ENCODE measurements at regions of chr17 and their contacts with region 1.

Region 1: DNA sequence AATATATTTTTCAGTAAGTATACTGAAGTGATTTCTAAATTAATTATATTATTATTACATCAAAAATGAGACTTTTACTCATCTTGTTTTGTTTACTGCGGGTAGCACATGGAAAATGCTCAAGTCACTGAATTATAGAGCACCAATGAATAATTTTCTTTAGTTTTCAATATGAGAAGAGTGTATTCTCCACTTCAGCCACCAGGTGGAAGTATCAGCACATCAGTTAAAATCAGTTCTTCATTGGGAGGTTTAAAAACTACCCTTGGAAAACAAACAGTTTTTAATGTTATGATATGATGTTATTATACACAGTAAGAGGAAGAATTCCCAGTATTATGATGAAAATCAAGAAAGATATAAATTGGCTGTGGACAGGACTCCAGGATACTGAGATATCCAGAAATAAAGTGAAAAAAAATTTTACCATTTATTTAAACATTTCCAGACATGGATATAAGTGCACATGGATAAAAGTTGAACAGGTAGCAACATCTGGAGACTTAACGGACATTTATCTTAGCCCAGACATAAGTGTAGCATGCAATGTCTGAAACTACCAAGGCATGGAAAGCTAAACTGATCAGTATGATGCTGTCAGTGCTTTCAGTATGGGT is 467.3 kb downstream of the KCNJ2 start:
- ATAC-seq: peak in 1 of 8 experiments; percentile 38
- H3K4me3 ChIP-seq: no peak overlapping the region
- H3K27ac ChIP-seq: no peak overlapping the region
- H3K4me1 ChIP-seq: peaks cover 0 to 3% of the 10 kb centered on the region in 2 donors

Region 2: DNA sequence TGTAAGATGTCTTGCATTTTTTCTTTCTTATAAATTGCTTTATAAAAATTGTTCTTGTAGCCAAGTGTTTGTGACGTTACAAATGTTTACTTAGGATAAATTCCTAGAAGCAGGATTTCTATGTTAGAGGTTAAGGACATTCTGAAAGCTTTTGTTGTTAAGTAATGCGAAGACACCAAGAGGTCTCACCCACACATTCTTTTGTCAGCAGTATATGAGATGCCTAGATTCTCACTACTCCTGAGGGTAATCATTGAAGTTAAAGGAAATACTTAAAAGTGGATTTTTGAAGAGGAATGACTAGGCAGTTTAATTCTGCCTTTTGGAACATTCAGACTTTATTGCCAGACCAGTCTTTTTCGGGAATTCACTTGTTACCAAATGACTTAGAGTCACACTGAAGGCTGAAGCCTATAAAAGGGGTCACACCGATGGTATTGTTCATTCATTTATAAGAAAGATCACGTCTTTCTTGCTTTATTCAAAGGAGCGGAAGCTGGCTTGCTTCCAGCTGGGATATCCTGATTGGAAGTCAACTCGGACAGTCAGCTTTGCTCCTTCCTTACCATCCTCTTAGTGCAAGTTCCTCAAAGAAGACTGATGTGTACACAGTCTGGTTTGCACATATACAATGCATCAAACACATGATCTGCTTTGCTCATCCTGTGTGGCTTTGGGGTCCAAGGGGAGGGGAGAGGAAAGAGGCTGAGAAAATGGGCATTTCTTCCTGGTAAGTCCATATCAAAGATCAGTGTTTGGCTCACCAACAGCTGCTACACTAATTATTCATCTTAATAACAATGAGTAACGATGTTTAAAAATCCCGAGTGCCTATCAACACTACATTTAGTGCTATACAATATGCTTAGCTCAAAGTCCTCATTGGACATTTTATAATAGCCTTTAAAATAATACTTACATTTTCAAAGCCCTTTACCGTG is 1062.1 kb before region 1 on chr17:
- in situ Hi-C with region 1: loop called in 2 of 9 experiments (anchors 25 kb)
- ATAC-seq: peak in 2 of 8 experiments; percentile 30 to 43
- H3K4me3 ChIP-seq: no peak overlapping the region
- H3K27ac ChIP-seq: no peak overlapping the region
- H3K4me1 ChIP-seq: peaks cover 0 to 6% of the 10 kb centered on the region in 2 donors

Region 3: DNA sequence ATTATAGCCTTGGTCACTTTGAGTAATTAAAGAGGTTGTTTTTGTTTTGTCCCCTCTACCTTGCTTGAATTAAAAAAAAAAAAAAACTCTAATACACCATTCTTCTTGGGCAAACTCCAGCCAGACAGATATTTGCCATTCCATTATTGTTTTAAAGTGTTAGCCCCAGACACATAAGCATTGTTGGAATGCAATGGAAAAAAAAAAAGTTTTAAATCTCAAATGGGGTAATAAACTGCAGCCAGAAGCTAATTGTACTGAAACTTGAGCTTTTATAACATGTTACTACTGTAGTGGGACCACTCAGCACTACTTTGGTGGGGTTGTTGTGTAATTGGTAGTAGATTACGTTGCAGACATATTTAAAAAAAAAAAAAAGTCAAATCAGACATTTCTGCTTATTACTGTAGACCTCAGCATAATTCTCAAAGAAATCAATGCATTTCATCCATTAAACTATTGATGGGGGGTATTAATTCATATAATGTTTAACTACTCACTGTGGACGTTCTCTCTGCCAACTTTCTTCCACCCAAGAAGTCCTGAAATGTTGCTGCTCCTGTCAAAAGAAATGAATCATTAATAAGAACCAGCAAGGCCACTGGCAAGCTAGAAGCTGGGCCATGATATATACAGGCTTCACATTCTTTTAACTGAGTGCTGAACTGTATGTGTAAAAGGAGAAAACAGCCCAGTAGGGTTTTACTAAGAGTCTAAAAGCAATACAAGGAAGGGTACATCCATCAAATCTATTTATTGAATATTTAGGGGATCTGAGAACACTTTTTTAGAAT is 857.6 kb after region 1 on chr17:
- in situ Hi-C with region 1: loop called in 1 of 9 experiments (anchors 25 kb)
- ATAC-seq: no peak
- H3K4me3 ChIP-seq: no peak overlapping the region
- H3K27ac ChIP-seq: no peak overlapping the region
- H3K4me1 ChIP-seq: no peaks in the 10 kb centered on the region

Region 4: DNA sequence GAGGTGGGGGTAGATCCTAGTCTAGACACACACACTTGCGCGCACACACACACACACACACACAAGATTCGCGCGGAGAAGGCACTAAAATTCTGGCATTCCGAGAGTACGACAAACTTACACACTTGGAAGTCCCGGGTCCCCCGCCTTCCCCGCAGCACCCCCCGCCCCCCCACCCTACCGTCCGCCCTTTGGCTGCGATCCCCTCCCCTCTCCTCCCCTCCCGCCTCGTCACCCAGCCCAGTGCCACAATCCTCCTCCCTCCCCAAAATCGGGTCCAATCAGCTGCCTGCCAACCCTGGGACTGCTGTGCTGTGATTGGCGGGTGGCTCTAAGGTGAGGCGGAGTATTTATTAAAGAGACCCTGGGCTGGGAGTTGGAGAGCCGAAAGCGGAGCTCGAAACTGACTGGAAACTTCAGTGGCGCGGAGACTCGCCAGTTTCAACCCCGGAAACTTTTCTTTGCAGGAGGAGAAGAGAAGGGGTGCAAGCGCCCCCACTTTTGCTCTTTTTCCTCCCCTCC is 1484.1 kb after region 1 on chr17 and contains the start of gene SOX9:
- in situ Hi-C with region 1: loop called in 3 of 9 experiments (anchors 25 kb)
- ATAC-seq: peak; percentile 69 to 88 (median 78)
- H3K4me3 ChIP-seq: peak within 1 kb of the TSS; percentile 44 to 54 (median 48)
- H3K27ac ChIP-seq: no peak within 1 kb of the TSS
- H3K4me1 ChIP-seq: peaks cover 33 to 42% of the 10 kb centered on the region in 2 donors
- total RNA-seq, gene SOX9: 1.8 to 108 (median 17.3) TPM

Measured in motor neuron (in vitro differentiated cells).